ENCODE measurements at regions of chr1 and their contacts with region 1.

Region 1: GRCh38 chr1:89598450-89599331 is 34.2 kb upstream of the LRRC8C start:
- DNase-seq: no peak
- ATAC-seq: peak; percentile 76 to 95 (median 92)
- H3K4me3 ChIP-seq: no peak overlapping the region
- H3K27ac ChIP-seq: no peak overlapping the region
- H3K4me1 ChIP-seq: peaks cover 0 to 5% (median 0%) of the 10 kb centered on the region in 3 donors
- H3K27me3 ChIP-seq: no peaks in the 10 kb centered on the region
- CTCF ChIP-seq: peak; percentile 33 to 61 (median 38)

Region 2: DNA sequence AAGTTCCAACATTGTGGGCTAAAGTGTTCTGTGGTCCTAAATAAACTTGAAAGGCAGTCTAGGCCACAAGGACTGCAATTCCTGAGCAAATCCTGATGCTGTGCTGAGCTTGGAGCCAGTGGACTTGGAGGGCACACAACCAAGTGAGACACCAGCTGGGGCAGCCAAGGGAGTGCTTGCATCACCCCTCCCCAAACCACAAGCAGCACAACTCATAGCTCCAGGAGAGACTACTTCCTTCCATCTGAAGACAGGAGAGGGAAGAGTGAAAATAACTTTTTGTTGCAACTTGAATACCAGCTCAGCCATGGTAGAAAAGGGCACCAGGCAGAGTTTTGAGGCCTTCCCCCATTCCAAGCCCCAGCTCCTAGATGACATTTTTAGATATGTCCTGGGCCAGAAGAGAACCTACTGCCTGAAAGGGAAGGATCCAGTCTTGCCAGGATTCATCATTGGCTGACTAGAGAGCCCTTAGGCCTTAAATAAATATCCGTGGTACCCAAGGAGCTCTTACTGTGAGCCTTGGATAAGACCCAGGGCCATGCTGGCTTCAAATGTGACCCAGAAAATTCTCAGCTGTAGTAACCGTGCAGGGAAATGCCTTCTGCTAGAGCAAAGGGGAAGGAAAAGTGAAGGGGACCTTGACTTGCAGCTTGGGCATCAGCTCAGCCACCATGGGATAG is 109.5 kb before region 1 on chr1:
- intact Hi-C with region 1: loop called in 2 of 3 experiments (anchors 5 to 10 kb)
- DNase-seq: no peak
- ATAC-seq: no peak
- H3K4me3 ChIP-seq: no peak overlapping the region
- H3K27ac ChIP-seq: no peak overlapping the region
- H3K4me1 ChIP-seq: no peaks in the 10 kb centered on the region
- H3K27me3 ChIP-seq: no peaks in the 10 kb centered on the region
- CTCF ChIP-seq: no peak